Natural killer cell (primary cell): ENCODE measurements at regions of chr1 and their contacts with region 1.

Region 1: DNA sequence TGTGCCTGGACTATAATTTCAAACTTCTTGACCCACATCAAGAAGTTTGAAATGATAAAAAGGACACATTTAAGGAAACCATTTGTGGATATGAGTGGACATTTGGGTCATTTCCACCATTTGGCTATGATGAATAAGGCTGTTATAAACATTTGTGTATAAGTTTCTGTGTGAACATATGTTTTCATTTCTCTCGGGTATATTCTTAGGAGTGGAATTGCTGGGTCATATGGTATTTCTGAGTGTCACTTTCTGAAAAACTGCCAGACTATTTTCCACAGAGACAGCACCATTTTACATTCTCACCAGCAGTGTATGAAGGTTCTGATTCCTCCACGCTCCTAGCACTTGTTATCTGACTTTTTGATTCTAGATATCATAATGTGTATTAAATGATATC is 50.8 kb downstream of the GPR137B start:
- DNase-seq: no peak
- ATAC-seq: no peak
- H3K4me3 ChIP-seq: no peak overlapping the region
- H3K4me3 Mint-ChIP-seq: no peak overlapping the region
- H3K27ac ChIP-seq: no peak overlapping the region
- H3K27ac Mint-ChIP-seq: no peak overlapping the region
- H3K4me1 ChIP-seq: no peaks in the 10 kb centered on the region
- H3K4me1 Mint-ChIP-seq: peaks cover 0 to 4% of the 10 kb centered on the region in 2 donors
- H3K27me3 ChIP-seq: no peaks in the 10 kb centered on the region
- H3K27me3 Mint-ChIP-seq: no peaks in the 10 kb centered on the region
- CTCF ChIP-seq: no peak

Region 2: GRCh38 chr1:236137285-236137852 is 55.8 kb before region 1 on chr1:
- intact Hi-C with region 1: loop called (anchors 10 kb)
- DNase-seq: peak in 1 of 2 donors; percentile 31
- ATAC-seq: no peak
- H3K4me3 ChIP-seq: no peak overlapping the region
- H3K4me3 Mint-ChIP-seq: no peak overlapping the region
- H3K27ac ChIP-seq: no peak overlapping the region
- H3K27ac Mint-ChIP-seq: no peak overlapping the region
- H3K4me1 ChIP-seq: peaks cover 9% of the 10 kb centered on the region
- H3K4me1 Mint-ChIP-seq: peaks cover 12 to 13% of the 10 kb centered on the region in 2 donors
- H3K27me3 ChIP-seq: peaks cover 17% of the 10 kb centered on the region
- H3K27me3 Mint-ChIP-seq: peaks cover 44 to 69% of the 10 kb centered on the region in 2 donors
- CTCF ChIP-seq: no peak